ENCODE measurements at regions of chrX and their contacts with region 1.

Region 1: GRCh38 chrX:134484039-134484438 is 24.1 kb downstream of the HPRT1 start:
- DNase-seq: no peak
- ATAC-seq: no peak
- H3K4me3 Mint-ChIP-seq: no peak overlapping the region
- H3K27ac Mint-ChIP-seq: no peak overlapping the region
- H3K4me1 Mint-ChIP-seq: no peaks in the 10 kb centered on the region
- H3K27me3 Mint-ChIP-seq: no peaks in the 10 kb centered on the region
- CTCF ChIP-seq: peak; percentile 35

Region 2: DNA sequence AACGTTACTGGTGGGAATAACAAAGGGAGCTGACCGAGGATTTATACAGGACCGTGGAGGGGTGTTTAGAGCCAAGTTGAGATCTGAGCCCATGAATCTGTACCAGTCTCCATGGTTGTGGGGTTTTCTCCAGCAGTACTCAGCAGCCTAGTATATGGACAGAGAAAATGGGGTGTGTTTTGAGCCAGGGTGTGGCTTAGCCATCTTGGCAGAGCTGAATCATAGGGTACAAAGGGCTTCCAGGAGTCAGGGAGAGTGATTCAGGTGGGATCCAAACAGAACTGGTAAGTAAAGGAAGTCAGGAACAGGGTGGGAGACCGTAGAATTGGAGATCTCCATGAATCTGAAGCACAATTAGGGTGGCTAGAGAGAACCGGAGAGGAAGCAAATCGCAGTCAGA is 31.4 kb before region 1 on chrX:
- CTCF ChIA-PET with region 1: no interaction called
- POLR2A ChIA-PET with region 1: no interaction called
- intact Hi-C with region 1: no loop called
- DNase-seq: no peak
- ATAC-seq: no peak
- H3K4me3 Mint-ChIP-seq: no peak overlapping the region
- H3K27ac Mint-ChIP-seq: no peak overlapping the region
- H3K4me1 Mint-ChIP-seq: no peaks in the 10 kb centered on the region
- H3K27me3 Mint-ChIP-seq: no peaks in the 10 kb centered on the region
- CTCF ChIP-seq: no peak

Region 3: DNA sequence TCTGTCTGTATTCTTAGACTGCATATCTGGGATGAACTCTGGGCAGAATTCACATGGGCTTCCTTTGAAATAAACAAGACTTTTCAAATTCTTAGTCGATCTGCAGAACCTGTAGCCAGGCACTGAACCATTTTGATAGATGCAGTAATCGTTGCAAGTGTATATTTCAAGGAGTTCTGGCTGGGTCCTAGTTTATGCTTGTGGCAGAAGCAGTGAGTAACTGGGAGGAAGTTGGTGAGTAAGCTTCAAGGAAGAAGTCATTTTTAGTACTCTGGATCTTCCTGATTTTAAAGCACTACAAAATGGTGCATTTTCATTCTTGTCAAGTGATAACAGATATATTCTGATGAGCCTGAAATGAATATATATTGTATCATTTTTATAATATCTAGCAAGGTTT is 14.6 kb before region 1 on chrX:
- CTCF ChIA-PET with region 1: no interaction called
- POLR2A ChIA-PET with region 1: no interaction called
- intact Hi-C with region 1: no loop called
- DNase-seq: no peak
- ATAC-seq: no peak
- H3K4me3 Mint-ChIP-seq: no peak overlapping the region
- H3K27ac Mint-ChIP-seq: no peak overlapping the region
- H3K4me1 Mint-ChIP-seq: peaks cover 3% of the 10 kb centered on the region
- H3K27me3 Mint-ChIP-seq: no peaks in the 10 kb centered on the region
- CTCF ChIP-seq: no peak

Region 4: DNA sequence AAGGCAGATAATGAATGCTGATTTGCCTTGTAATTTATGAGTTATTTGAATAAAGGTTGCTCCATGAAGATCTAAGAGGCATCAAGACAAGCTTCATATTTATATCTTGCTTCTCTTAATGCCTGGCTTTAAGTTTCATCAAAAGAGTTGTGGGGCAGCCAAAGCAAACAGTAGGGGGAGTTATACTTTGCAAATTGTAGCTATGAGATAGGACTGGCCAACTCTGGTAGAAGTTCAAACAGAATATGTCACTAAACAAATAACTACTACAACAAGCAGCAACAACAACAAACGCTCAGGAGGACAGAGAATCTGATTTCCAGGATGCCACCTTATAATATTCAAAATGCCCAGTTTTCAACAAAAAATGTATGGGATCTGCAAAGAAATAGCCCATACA is 243.3 kb after region 1 on chrX:
- CTCF ChIA-PET with region 1: no interaction called
- POLR2A ChIA-PET with region 1: no interaction called
- intact Hi-C with region 1: no loop called
- DNase-seq: no peak
- ATAC-seq: no peak
- H3K4me3 Mint-ChIP-seq: no peak overlapping the region
- H3K27ac Mint-ChIP-seq: no peak overlapping the region
- H3K4me1 Mint-ChIP-seq: no peaks in the 10 kb centered on the region
- H3K27me3 Mint-ChIP-seq: peaks cover 4% of the 10 kb centered on the region
- CTCF ChIP-seq: no peak

Region 5: GRCh38 chrX:134764212-134764785 is 280.3 kb after region 1 on chrX:
- CTCF ChIA-PET with region 1: interaction called, 4 read pairs
- POLR2A ChIA-PET with region 1: no interaction called
- intact Hi-C with region 1: loop called (anchors 10 kb)
- DNase-seq: no peak
- ATAC-seq: peak; percentile 88
- H3K4me3 Mint-ChIP-seq: no peak overlapping the region
- H3K27ac Mint-ChIP-seq: no peak overlapping the region
- H3K4me1 Mint-ChIP-seq: no peaks in the 10 kb centered on the region
- H3K27me3 Mint-ChIP-seq: no peaks in the 10 kb centered on the region
- CTCF ChIP-seq: no peak

Measured in activated CD8-positive, alpha-beta T cell treated with anti-CD3 and anti-CD28 coated beads for 36 hours (primary cell).